WTC11 (cell line): ENCODE measurements at regions of chr14 and their contacts with region 1.

Region 1: DNA sequence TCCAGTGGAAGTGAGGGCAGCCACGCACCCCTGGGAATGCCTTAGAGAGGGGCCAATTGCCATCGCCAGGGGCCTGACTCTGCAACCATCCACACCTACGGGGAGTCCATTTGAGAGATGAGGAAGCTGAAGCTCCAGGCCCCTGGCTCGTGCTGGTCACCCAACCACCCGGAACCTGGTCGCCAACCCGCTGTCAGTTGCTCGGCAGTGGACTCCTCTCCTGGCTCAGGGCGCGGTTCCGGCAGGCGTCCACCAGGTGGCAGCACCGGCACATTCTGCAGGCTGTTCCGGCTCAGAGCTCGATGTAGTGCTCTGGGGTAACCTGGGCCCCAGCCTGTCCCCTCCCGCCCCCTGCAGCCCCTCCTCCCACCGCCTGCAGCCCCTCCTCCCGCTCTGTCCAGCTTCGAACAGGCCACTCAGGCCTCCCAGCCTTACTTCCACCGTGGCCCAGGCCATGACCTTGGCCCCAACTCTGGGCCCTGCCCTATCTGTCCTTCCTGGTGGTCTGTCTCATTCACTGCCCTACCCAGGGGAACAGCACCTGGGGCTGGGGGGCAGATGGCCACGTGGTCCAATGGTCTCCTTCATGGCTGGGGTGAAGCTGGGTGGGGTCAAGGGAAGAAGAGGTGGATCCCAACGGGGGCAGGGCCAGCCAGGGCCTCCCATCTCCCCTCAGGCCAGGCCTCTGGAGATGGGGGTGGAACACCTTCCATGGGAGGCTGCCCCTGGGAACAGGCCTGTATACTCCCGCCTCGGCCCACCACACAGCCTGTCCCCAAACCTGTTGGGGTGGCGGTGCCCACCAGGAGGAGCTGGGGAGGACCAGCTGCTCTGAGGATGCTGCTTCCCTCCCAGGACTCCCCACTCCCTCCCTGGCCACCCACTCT is 15.7 kb downstream of the SIVA1 start:
- DNase-seq: peak; percentile 99
- ATAC-seq: peak; percentile 86
- H3K4me3 Mint-ChIP-seq: peak overlapping the region; percentile 56
- H3K27ac Mint-ChIP-seq: peak overlapping the region; percentile 81
- H3K4me1 Mint-ChIP-seq: peaks cover 17% of the 10 kb centered on the region
- H3K27me3 Mint-ChIP-seq: no peaks in the 10 kb centered on the region; the same call in 1 of the 2 replicates
- CTCF ChIP-seq: peak; percentile 90

Region 2: GRCh38 chr14:104689109-104689880 is 79.4 kb before region 1 on chr14 and contains the start of gene INF2:
- CTCF ChIA-PET with region 1: no interaction called
- POLR2A ChIA-PET with region 1: no interaction called
- DNase-seq: peak; percentile 73
- ATAC-seq: peak; percentile 66
- H3K4me3 Mint-ChIP-seq: peak within 1 kb of the TSS; percentile 63
- H3K27ac Mint-ChIP-seq: no peak within 1 kb of the TSS
- H3K4me1 Mint-ChIP-seq: peaks cover 34% of the 10 kb centered on the region
- H3K27me3 Mint-ChIP-seq: no peaks in the 10 kb centered on the region; the same call in 1 of the 2 replicates
- CTCF ChIP-seq: no peak
- total RNA-seq, gene INF2: 69.0 to 82.4 TPM (median 72.4 TPM) in 3 replicates

Region 3: DNA sequence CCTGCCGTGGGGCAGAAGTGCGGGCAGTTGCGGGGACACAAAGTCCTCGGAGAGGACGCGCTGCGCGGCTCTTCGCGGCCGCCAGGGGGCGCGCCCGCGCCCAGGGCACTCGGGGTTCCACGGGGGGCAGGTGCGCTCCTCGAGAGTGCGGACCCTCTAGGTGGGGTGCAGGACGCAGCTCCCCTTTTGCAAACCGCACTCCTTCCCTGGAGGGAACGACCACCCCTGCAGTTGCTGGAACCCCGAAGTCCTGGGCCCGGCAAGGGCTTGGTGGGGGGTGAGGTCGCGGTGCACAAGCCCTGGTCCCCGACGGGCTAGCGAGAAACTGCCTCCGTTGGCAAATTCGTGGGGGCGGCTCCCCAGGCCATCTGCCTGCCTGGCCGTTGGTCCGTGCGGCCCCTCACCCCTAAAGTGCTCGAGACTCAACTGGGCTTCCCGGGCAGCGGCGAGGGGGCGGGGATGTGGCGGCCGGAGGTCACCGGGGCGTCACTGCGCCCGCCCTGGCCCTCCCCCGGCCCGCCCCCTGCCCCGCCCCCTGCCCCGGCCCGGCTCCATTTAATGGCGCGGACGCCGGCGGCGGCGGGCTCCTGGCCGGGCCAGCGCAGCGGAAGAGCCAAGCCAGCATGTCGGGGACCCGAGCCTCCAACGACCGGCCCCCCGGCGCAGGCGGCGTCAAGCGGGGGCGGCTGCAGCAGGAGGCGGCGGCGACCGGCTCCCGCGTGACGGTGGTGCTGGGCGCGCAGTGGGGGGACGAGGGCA is 44.9 kb before region 1 on chr14 and contains the start of gene ADSS1:
- CTCF ChIA-PET with region 1: interaction called, 20 read pairs
- POLR2A ChIA-PET with region 1: no interaction called
- DNase-seq: peak; percentile 66
- ATAC-seq: peak; percentile 51
- H3K4me3 Mint-ChIP-seq: peak within 1 kb of the TSS; percentile 69
- H3K27ac Mint-ChIP-seq: no peak within 1 kb of the TSS
- H3K4me1 Mint-ChIP-seq: peaks cover 5% of the 10 kb centered on the region
- H3K27me3 Mint-ChIP-seq: peaks cover 2% of the 10 kb centered on the region; the same call in 1 of the 2 replicates
- CTCF ChIP-seq: peak; percentile 99
- total RNA-seq, gene ADSS1: 10.0 to 13.3 TPM (median 12.0 TPM) in 3 replicates

Region 4: GRCh38 chr14:104794641-104795467 is 26.2 kb after region 1 on chr14:
- CTCF ChIA-PET with region 1: interaction called, 67 read pairs
- POLR2A ChIA-PET with region 1: interaction called, 4 read pairs
- DNase-seq: no peak
- ATAC-seq: peak; percentile 5
- H3K4me3 Mint-ChIP-seq: peak overlapping the region; percentile 87
- H3K27ac Mint-ChIP-seq: peak overlapping the region; percentile 78
- H3K4me1 Mint-ChIP-seq: peaks cover 47% of the 10 kb centered on the region
- H3K27me3 Mint-ChIP-seq: peaks cover 39% of the 10 kb centered on the region
- CTCF ChIP-seq: no peak

Region 5: DNA sequence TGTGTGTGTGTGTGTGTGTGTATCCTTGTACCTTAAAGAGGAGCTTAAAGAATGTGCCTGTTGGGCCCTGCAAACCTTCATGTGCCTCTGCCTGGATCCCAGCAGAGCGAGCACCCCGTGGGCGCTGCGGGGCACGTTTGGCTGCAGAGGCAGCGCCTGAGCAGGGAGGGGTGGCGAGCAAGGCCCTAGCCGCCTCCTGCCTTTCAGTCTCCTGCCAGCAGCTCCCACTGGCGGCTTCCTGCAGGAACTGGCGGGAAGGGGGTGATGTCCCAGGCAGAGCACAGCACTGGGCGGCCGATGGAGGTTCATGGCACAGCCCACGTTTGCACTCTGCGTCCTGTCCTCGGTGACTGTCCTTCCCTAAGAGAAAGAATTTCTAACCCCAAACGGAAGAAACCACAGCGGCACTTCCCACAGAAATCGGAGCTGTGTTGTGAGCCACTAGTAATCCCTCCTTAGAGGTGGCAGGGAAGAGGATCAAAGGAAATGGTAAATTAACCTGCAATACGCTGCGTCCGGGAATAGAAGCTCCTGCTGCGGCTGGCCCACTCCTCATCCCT is 52.1 kb after region 1 on chr14:
- CTCF ChIA-PET with region 1: interaction called, 164 read pairs
- POLR2A ChIA-PET with region 1: interaction called, 6 read pairs
- DNase-seq: peak; percentile 76
- ATAC-seq: peak; percentile 80
- H3K4me3 Mint-ChIP-seq: no peak overlapping the region
- H3K27ac Mint-ChIP-seq: no peak overlapping the region
- H3K4me1 Mint-ChIP-seq: peaks cover 18% of the 10 kb centered on the region
- H3K27me3 Mint-ChIP-seq: peaks cover 25% of the 10 kb centered on the region
- CTCF ChIP-seq: no peak

Region 6: GRCh38 chr14:104865644-104866441 is 97.2 kb after region 1 on chr14:
- CTCF ChIA-PET with region 1: interaction called, 12 read pairs
- POLR2A ChIA-PET with region 1: interaction called, 3 read pairs
- DNase-seq: peak; percentile 74
- ATAC-seq: peak; percentile 50
- H3K4me3 Mint-ChIP-seq: peak overlapping the region; percentile 70
- H3K27ac Mint-ChIP-seq: no peak overlapping the region
- H3K4me1 Mint-ChIP-seq: peaks cover 18% of the 10 kb centered on the region
- H3K27me3 Mint-ChIP-seq: no peaks in the 10 kb centered on the region
- CTCF ChIP-seq: no peak

Region 7: GRCh38 chr14:104895786-104896661 is 127.3 kb after region 1 on chr14:
- CTCF ChIA-PET with region 1: interaction called, 11 read pairs
- POLR2A ChIA-PET with region 1: no interaction called
- DNase-seq: no peak
- ATAC-seq: no peak
- H3K4me3 Mint-ChIP-seq: no peak overlapping the region
- H3K27ac Mint-ChIP-seq: no peak overlapping the region
- H3K4me1 Mint-ChIP-seq: peaks cover 2% of the 10 kb centered on the region; the same call in 1 of the 2 replicates
- H3K27me3 Mint-ChIP-seq: no peaks in the 10 kb centered on the region; the same call in 1 of the 2 replicates
- CTCF ChIP-seq: no peak

Region 8: GRCh38 chr14:105045710-105046326 is 277.1 kb after region 1 on chr14:
- CTCF ChIA-PET with region 1: interaction called, 10 read pairs
- POLR2A ChIA-PET with region 1: no interaction called
- DNase-seq: peak; percentile 96
- ATAC-seq: peak; percentile 92
- H3K4me3 Mint-ChIP-seq: no peak overlapping the region
- H3K27ac Mint-ChIP-seq: no peak overlapping the region
- H3K4me1 Mint-ChIP-seq: no peaks in the 10 kb centered on the region
- H3K27me3 Mint-ChIP-seq: peaks cover 20% of the 10 kb centered on the region
- CTCF ChIP-seq: peak; percentile 100

Region 9: GRCh38 chr14:105059035-105059924 is 290.6 kb after region 1 on chr14:
- CTCF ChIA-PET with region 1: no interaction called
- POLR2A ChIA-PET with region 1: no interaction called
- DNase-seq: peak; percentile 46
- ATAC-seq: peak; percentile 76
- H3K4me3 Mint-ChIP-seq: no peak overlapping the region
- H3K27ac Mint-ChIP-seq: no peak overlapping the region
- H3K4me1 Mint-ChIP-seq: peaks cover 15% of the 10 kb centered on the region; the same call in 1 of the 2 replicates
- H3K27me3 Mint-ChIP-seq: peaks cover 28% of the 10 kb centered on the region
- CTCF ChIP-seq: no peak